ENCODE measurements at regions of chr11 and their contacts with region 1.

Region 1: GRCh38 chr11:130861902-130862860 is 54.1 kb downstream of the SNX19 start:
- ATAC-seq: peak; percentile 80 to 97 (median 94)
- H3K4me3 ChIP-seq: peak overlapping the region in 2 of 5 donors; percentile 2 to 12
- H3K27ac ChIP-seq: no peak overlapping the region
- H3K4me1 ChIP-seq: no peaks in the 10 kb centered on the region

Region 2: DNA sequence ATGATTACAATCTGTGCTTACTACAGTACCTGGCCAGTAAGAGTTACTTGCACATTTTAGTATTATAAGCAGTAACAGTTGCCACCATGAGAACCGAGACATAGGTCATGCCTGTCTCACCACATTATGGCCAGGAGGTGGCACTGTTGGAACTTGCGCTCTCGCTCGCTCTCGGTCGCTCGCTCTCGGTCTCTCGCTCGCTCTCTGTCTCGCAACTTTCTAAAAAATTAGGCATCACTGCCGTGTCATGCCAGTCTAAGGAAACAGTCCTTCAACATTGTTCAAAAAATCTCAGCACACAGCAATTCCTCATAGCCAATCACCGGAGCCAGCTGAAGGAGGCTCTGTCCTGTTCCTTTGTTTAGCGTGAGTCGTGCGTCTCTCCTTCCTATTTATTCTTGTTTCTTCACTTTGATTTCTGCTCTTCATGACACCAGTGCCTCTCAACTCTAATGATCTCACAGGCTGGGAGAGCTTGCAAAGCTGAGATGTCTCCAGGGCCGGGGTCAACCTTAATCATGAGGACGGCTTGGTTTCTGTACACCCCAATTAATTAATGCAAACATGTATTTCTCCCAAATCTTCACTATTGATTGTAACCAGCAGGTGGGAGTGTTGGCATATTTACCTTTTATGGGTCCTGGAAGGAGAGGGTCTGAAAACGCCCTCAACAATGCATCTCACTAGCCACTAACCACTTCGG is 427.5 kb before region 1 on chr11:
- in situ Hi-C with region 1: loop called in 7 of 9 experiments (anchors 10 to 25 kb)
- ATAC-seq: peak; percentile 76 to 93 (median 86)
- H3K4me3 ChIP-seq: peak overlapping the region; percentile 41 to 57 (median 49)
- H3K27ac ChIP-seq: no peak overlapping the region
- H3K4me1 ChIP-seq: no peaks in the 10 kb centered on the region

Region 3: GRCh38 chr11:130448416-130449309 is 413.5 kb before region 1 on chr11 and contains the start of gene ADAMTS15:
- in situ Hi-C with region 1: loop called in 6 of 9 experiments (anchors 10 to 25 kb)
- ATAC-seq: peak; percentile 85 to 91 (median 88)
- H3K4me3 ChIP-seq: peak within 1 kb of the TSS; percentile 38 to 54 (median 44)
- H3K27ac ChIP-seq: no peak within 1 kb of the TSS
- H3K4me1 ChIP-seq: peaks cover 2 to 6% of the 10 kb centered on the region in 2 donors
- total RNA-seq, gene ADAMTS15: 0.52 to 55.3 (median 1.1) TPM

Measured in motor neuron (in vitro differentiated cells).